A549 (cell line): ENCODE measurements at regions of chr6 and their contacts with region 1.

Region 1: GRCh38 chr6:3929281-3929798 is 80.2 kb downstream of the FAM50B start:
- DNase-seq: no peak
- ATAC-seq: no peak
- H3K4me3 ChIP-seq: no peak overlapping the region
- H3K27ac ChIP-seq: no peak overlapping the region; a peak in 1 of 6 replicates
- H3K4me1 ChIP-seq: peaks cover 13% of the 10 kb centered on the region; the same call in 2 of the 3 replicates
- CTCF ChIP-seq: no peak
- EP300 ChIP-seq: no peak
- POLR2A ChIP-seq: no peak
- RAD21 ChIP-seq: no peak

Region 2: DNA sequence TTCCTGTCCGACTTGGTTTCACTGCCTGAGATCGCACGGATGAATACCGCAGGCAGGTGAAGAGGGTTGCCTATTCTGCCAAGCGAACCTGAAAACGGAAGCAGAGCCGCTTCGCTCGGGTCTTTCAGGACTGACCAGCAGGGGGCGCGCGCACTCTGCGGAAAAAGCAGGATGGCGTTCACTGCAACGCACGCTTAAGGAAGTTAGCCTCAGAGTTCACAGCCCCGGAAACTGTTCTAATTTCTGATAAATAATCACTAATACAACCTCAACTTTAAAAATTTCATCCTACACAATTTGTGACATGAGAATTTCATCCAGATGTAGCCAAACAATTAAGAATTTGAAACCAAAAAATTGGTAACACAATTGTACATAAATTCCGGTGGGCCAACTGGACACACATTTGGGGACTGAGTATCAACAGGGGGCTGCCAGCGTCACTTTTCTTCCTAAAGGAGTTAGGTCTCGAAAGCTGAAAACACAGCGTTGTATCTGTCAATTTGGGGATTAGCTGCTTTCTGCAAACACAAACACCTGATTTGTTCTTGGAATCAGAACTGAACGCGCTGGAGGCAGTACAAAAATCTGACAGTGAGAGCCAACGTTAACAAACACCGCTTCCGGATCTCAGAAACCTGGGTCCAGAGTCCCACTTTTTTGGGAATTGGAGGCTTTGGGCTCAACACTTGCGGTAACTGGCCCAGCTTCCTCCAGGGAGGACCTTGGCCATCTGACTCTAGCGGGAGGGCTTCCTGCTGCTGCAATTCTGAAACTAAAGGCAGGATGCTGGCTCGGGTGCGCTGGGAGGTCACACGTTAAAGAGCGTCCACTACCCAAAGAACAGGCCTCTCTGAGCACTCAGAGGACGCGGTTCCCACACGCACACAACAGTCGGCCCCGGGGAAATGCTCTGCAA is 186.7 kb before region 1 on chr6:
- CTCF ChIA-PET with region 1: interaction called, 72 read pairs
- POLR2A ChIA-PET with region 1: no interaction called
- DNase-seq: peak; percentile 47 to 73
- ATAC-seq: peak; percentile 80 to 87
- H3K4me3 ChIP-seq: no peak overlapping the region
- H3K27ac ChIP-seq: peak overlapping the region; percentile 59 to 74; a peak in 5 of 6 replicates
- H3K4me1 ChIP-seq: peaks cover 20% of the 10 kb centered on the region
- CTCF ChIP-seq: peak; percentile 78
- EP300 ChIP-seq: no peak
- POLR2A ChIP-seq: no peak
- RAD21 ChIP-seq: peak; percentile 94

Region 3: GRCh38 chr6:3755637-3756545 is 173.4 kb before region 1 on chr6:
- CTCF ChIA-PET with region 1: interaction called, 72 read pairs
- POLR2A ChIA-PET with region 1: no interaction called
- DNase-seq: no peak
- ATAC-seq: no peak
- H3K4me3 ChIP-seq: no peak overlapping the region
- H3K27ac ChIP-seq: no peak overlapping the region
- H3K4me1 ChIP-seq: peaks cover 17% of the 10 kb centered on the region
- CTCF ChIP-seq: no peak
- EP300 ChIP-seq: no peak
- POLR2A ChIP-seq: no peak
- RAD21 ChIP-seq: no peak

Region 4: DNA sequence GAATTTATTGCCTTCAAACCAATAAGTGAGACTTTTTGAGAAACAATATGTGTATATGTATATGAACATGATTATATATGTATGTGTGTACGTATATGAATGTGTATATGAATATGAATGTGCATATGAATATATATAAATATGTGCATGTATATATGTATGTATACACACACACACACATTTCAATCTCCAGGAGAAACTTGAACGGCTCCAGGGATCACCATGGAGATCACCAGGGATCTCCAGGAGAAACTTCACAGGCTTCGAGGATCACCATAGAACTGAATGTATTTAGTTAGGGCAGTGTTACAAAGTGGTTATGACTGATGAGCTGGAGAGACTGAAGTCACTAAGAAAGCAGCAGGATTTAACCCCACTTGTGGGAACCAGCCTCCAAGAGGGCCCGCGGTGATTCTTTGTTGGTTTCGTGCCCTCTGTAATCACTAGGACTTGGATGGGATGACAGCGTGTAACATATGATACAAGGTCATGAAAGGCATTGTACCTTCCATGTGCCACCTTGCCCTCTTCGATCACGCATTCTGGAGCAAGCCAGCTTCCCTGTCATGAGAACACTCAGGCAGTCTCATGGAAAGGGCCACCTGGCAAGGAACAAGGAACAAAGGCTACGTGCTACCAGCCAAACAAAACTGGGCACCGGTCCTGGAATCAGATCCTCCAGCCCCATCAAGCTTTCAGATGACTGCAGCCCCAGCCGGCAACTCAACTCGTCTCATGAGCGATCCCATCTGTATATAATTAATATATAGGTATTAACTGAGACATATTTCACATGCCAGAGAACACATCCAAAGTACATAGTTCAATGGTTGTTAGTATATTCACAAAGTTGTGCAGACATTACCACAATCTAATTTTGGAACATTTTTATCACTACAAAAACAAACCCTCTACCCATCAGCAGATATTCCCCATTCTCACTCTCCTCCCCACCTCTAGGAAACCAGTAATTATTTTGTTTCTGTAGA is 71.6 kb before region 1 on chr6:
- CTCF ChIA-PET with region 1: interaction called, 24 read pairs
- POLR2A ChIA-PET with region 1: no interaction called
- DNase-seq: no peak
- ATAC-seq: no peak
- H3K4me3 ChIP-seq: no peak overlapping the region
- H3K27ac ChIP-seq: no peak overlapping the region
- H3K4me1 ChIP-seq: no peaks in the 10 kb centered on the region
- CTCF ChIP-seq: no peak
- EP300 ChIP-seq: no peak
- POLR2A ChIP-seq: no peak
- RAD21 ChIP-seq: no peak

Region 5: GRCh38 chr6:3894590-3895311 is 34.6 kb before region 1 on chr6:
- CTCF ChIA-PET with region 1: interaction called, 13 read pairs
- POLR2A ChIA-PET with region 1: no interaction called
- DNase-seq: no peak
- ATAC-seq: no peak
- H3K4me3 ChIP-seq: no peak overlapping the region
- H3K27ac ChIP-seq: no peak overlapping the region
- H3K4me1 ChIP-seq: no peaks in the 10 kb centered on the region
- CTCF ChIP-seq: no peak
- EP300 ChIP-seq: no peak
- POLR2A ChIP-seq: no peak
- RAD21 ChIP-seq: no peak

Region 6: GRCh38 chr6:3919130-3919628 is 10.2 kb before region 1 on chr6:
- CTCF ChIA-PET with region 1: interaction called, 55 read pairs
- POLR2A ChIA-PET with region 1: no interaction called
- DNase-seq: peak in 1 of 2 experiments; percentile 12
- ATAC-seq: 0 out of 6 replicates have a peak, but pooled peaks of 1 of the 2 experiments have one; percentile 24
- H3K4me3 ChIP-seq: no peak overlapping the region
- H3K27ac ChIP-seq: peak overlapping the region; percentile 50 to 56; a peak in 4 of 6 replicates
- H3K4me1 ChIP-seq: peaks cover 13% of the 10 kb centered on the region
- CTCF ChIP-seq: no peak
- EP300 ChIP-seq: no peak
- POLR2A ChIP-seq: no peak
- RAD21 ChIP-seq: no peak

Region 7: GRCh38 chr6:3990692-3991501 is 61.6 kb after region 1 on chr6:
- CTCF ChIA-PET with region 1: interaction called, 20 read pairs
- POLR2A ChIA-PET with region 1: no interaction called
- DNase-seq: peak; percentile 55 to 80
- ATAC-seq: peak; percentile 97 to 98
- H3K4me3 ChIP-seq: no peak overlapping the region
- H3K27ac ChIP-seq: peak overlapping the region; percentile 34 to 69; a peak in 4 of 6 replicates
- H3K4me1 ChIP-seq: peaks cover 19% of the 10 kb centered on the region; the same call in 2 of the 3 replicates
- CTCF ChIP-seq: peak; percentile 65
- EP300 ChIP-seq: no peak
- POLR2A ChIP-seq: no peak
- RAD21 ChIP-seq: peak; percentile 84 to 90

Region 8: DNA sequence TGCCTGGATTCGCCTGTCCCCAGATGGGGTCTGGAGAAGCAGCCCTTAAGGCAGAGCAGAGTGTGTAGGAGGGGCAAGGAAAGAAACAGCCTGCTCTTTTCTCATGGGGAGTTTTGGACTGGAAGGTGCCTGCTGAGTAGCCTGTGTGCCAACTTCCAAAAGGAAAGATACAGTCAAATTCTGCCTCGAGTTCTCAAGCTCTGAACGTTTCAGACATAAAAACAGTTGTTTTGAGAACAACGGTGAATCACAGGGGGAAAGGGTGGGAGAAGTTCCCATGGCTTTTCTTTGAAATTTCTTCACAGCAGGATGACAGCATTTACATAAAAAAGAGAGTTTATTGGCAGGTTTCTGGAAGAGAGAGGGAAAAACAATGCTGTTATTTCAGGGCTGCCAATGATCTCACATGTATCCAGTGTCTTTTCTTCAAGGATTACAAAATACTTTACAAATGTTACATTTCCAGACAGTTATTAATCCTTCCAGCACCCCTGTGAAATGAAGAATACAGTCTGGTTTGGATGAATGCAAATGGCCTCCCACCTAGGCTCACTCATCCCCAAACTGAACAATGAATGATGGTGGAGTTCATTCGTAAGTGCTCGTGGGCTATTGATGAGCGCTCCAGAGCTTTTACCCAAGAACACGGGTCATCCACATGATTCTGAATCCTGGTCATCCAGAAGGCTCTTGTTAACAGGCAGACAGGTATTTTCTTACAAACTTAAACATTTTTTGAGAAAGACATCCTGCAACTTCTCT is 239.9 kb after region 1 on chr6:
- CTCF ChIA-PET with region 1: no interaction called
- POLR2A ChIA-PET with region 1: no interaction called
- DNase-seq: no peak
- ATAC-seq: no peak
- H3K4me3 ChIP-seq: no peak overlapping the region
- H3K27ac ChIP-seq: no peak overlapping the region
- H3K4me1 ChIP-seq: no peaks in the 10 kb centered on the region
- CTCF ChIP-seq: no peak
- EP300 ChIP-seq: no peak
- POLR2A ChIP-seq: no peak
- RAD21 ChIP-seq: no peak

Region 9: DNA sequence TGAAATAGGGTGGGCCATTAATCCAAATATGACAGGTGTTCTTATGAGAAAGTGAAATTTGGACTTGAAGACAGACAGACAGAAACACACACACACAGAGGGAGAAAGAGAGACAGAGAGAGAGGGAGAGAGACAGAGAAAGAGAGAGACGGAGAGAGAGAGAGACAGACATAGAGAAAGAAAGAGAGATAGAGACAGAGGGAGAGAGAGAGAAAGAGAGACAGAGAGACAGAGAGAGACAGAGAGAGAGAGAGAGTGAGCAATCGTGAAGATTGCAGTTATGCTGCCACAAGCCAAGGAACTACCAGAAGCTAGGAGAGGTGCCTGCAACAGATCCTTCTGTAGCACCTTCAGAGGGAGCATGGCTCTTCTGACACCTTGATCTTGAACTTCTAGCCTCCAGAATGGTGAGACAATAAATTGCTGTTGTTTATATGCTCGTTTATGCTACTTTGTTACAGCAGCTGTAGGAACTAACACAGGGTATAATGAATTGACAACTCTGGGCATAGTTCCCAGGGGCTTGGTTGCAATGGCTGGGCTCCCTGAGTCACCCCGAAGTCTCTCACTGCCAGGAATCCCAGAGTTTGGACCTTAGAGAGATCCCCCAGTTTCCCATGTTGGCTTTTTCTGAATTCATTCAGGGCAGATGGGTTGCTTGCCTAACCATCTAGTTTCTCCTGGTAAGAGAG is 250.8 kb after region 1 on chr6:
- CTCF ChIA-PET with region 1: no interaction called
- POLR2A ChIA-PET with region 1: no interaction called
- DNase-seq: no peak
- ATAC-seq: no peak
- H3K4me3 ChIP-seq: no peak overlapping the region
- H3K27ac ChIP-seq: no peak overlapping the region
- H3K4me1 ChIP-seq: peaks cover 5% of the 10 kb centered on the region; the same call in 1 of the 3 replicates
- CTCF ChIP-seq: no peak
- EP300 ChIP-seq: no peak
- POLR2A ChIP-seq: no peak
- RAD21 ChIP-seq: no peak

Region 10: GRCh38 chr6:4805553-4806336 is 876.4 kb after region 1 on chr6:
- CTCF ChIA-PET with region 1: no interaction called
- POLR2A ChIA-PET with region 1: no interaction called
- DNase-seq: peak; percentile 62 to 70
- ATAC-seq: peak; percentile 84 to 90
- H3K4me3 ChIP-seq: no peak overlapping the region
- H3K27ac ChIP-seq: peak overlapping the region; percentile 43 to 81; a peak in 3 of 6 replicates
- H3K4me1 ChIP-seq: peaks cover 65% of the 10 kb centered on the region
- CTCF ChIP-seq: peak; percentile 56
- EP300 ChIP-seq: no peak
- POLR2A ChIP-seq: no peak
- RAD21 ChIP-seq: peak; percentile 68 to 69